Testis (tissue), 5 donors: ENCODE measurements at regions of chr4 and their contacts with region 1.

Region 1: DNA sequence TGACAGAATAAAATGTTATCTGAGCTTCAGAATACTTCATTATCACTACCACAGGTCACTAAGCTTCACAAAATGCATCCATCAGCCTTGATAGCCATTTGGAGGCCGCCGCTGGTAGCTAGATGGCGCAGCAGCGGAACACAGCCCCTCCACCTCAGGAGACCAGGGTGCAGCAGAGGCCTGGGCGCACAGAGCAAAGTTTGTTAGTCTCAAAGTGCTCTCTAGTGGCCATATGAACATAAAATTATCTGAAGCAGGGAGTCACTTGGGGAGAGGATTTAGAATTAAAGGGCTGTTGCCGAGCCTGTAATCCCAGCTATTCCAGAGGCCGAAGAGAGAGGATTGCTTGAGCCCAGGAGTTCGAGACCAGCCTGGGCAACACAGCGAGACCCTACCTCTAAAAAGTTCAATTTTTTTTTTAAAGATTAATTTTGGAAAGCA is 8.1 kb upstream of the DCTD start:
- DNase-seq: peak; percentile 85
- H3K4me3 ChIP-seq: no peak overlapping the region
- H3K27ac ChIP-seq: no peak overlapping the region
- H3K4me1 ChIP-seq: no peaks in the 10 kb centered on the region
- H3K27me3 ChIP-seq: no peaks in the 10 kb centered on the region
- CTCF ChIP-seq: peak; percentile 26 to 43 (median 35)
- POLR2A ChIP-seq: no peak

Region 2: GRCh38 chr4:183256756-183257385 is 331.6 kb after region 1 on chr4:
- intact Hi-C with region 1: loop called (anchors 10 kb)
- DNase-seq: peak; percentile 71
- H3K4me3 ChIP-seq: no peak overlapping the region
- H3K27ac ChIP-seq: no peak overlapping the region
- H3K4me1 ChIP-seq: no peaks in the 10 kb centered on the region
- H3K27me3 ChIP-seq: no peaks in the 10 kb centered on the region
- CTCF ChIP-seq: peak; percentile 59 to 79 (median 64)
- POLR2A ChIP-seq: no peak

Region 3: DNA sequence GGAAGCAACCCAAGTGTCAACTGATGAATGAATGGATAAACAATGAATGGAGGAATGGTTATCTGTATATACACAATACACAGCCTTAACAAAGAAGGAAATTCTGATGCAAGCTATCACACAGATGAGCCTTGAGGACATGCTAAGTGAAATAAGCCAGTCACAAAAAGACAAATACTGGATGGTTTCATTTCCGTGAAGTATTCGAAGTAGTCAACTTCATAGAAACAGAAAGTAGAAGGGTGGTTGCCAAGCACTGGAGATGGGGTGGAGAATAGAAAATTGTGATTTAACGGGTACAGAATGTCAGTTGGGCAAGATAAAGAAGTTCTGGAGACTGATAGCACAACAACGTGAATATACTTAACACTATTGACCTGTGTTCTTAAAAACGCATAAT is 1780.4 kb after region 1 on chr4:
- intact Hi-C with region 1: no loop called
- DNase-seq: no peak
- H3K4me3 ChIP-seq: no peak overlapping the region
- H3K27ac ChIP-seq: no peak overlapping the region
- H3K4me1 ChIP-seq: no peaks in the 10 kb centered on the region
- H3K27me3 ChIP-seq: no peaks in the 10 kb centered on the region
- CTCF ChIP-seq: no peak
- POLR2A ChIP-seq: no peak